ENCODE measurements at regions of chr19 and their contacts with region 1.

Region 1: GRCh38 chr19:2977001-2977685 is at the start of gene TLE6:
- DNase-seq: peak; percentile 96
- H3K4me3 ChIP-seq: peak within 1 kb of the TSS; percentile 3 to 54 (median 32)
- H3K27ac ChIP-seq: peak within 1 kb of the TSS; percentile 11 to 62 (median 45)
- H3K4me1 ChIP-seq: peaks cover 17 to 39% (median 25%) of the 10 kb centered on the region in 4 donors
- H3K27me3 ChIP-seq: no peaks in the 10 kb centered on the region
- CTCF ChIP-seq: no peak
- EP300 ChIP-seq: no peak
- POLR2A ChIP-seq: no peak
- total RNA-seq, gene TLE6: not detected

Region 2: GRCh38 chr19:2678043-2678671 is 299.0 kb before region 1 on chr19:
- in situ Hi-C with region 1: no loop called
- intact Hi-C with region 1: no loop called
- DNase-seq: peak; percentile 39
- H3K4me3 ChIP-seq: no peak overlapping the region
- H3K27ac ChIP-seq: peak overlapping the region in 2 of 4 donors; percentile 25 to 37
- H3K4me1 ChIP-seq: no peaks in the 10 kb centered on the region
- H3K27me3 ChIP-seq: no peaks in the 10 kb centered on the region
- CTCF ChIP-seq: no peak
- EP300 ChIP-seq: no peak
- POLR2A ChIP-seq: no peak

Region 3: GRCh38 chr19:2811735-2812406 is 165.3 kb before region 1 on chr19:
- in situ Hi-C with region 1: no loop called
- intact Hi-C with region 1: no loop called
- DNase-seq: peak; percentile 83
- H3K4me3 ChIP-seq: peak overlapping the region in 1 of 4 donors; percentile 18
- H3K27ac ChIP-seq: peak overlapping the region; percentile 73 to 77 (median 76)
- H3K4me1 ChIP-seq: peaks cover 0 to 19% (median 16%) of the 10 kb centered on the region in 4 donors
- H3K27me3 ChIP-seq: no peaks in the 10 kb centered on the region
- CTCF ChIP-seq: no peak
- EP300 ChIP-seq: no peak
- POLR2A ChIP-seq: peak; percentile 36

Region 4: GRCh38 chr19:3035542-3036118 is 58.5 kb after region 1 on chr19:
- in situ Hi-C with region 1: loop called in 1 of 4 experiments (anchors 10 kb)
- intact Hi-C with region 1: no loop called
- DNase-seq: peak; percentile 98
- H3K4me3 ChIP-seq: peak overlapping the region; percentile 28 to 62 (median 48)
- H3K27ac ChIP-seq: peak overlapping the region; percentile 92 to 96 (median 94)
- H3K4me1 ChIP-seq: peaks cover 11 to 26% (median 22%) of the 10 kb centered on the region in 4 donors
- H3K27me3 ChIP-seq: no peaks in the 10 kb centered on the region
- CTCF ChIP-seq: peak in 1 of 5 experiments; percentile 15
- EP300 ChIP-seq: no peak
- POLR2A ChIP-seq: peak; percentile 21

Region 5: GRCh38 chr19:3062168-3063102 is 85.3 kb after region 1 on chr19 and contains the start of gene TLE5:
- in situ Hi-C with region 1: no loop called
- intact Hi-C with region 1: loop called (anchors 5 kb)
- DNase-seq: peak; percentile 80
- H3K4me3 ChIP-seq: peak within 1 kb of the TSS; percentile 52 to 97 (median 92)
- H3K27ac ChIP-seq: peak within 1 kb of the TSS; percentile 95 to 99 (median 96)
- H3K4me1 ChIP-seq: peaks cover 20 to 60% (median 38%) of the 10 kb centered on the region in 4 donors
- H3K27me3 ChIP-seq: no peaks in the 10 kb centered on the region
- CTCF ChIP-seq: peak in 2 of 5 experiments; percentile 19 to 20
- EP300 ChIP-seq: no peak
- POLR2A ChIP-seq: peak; percentile 21
- total RNA-seq, gene TLE5: 307 to 561 (median 400) TPM

Region 6: DNA sequence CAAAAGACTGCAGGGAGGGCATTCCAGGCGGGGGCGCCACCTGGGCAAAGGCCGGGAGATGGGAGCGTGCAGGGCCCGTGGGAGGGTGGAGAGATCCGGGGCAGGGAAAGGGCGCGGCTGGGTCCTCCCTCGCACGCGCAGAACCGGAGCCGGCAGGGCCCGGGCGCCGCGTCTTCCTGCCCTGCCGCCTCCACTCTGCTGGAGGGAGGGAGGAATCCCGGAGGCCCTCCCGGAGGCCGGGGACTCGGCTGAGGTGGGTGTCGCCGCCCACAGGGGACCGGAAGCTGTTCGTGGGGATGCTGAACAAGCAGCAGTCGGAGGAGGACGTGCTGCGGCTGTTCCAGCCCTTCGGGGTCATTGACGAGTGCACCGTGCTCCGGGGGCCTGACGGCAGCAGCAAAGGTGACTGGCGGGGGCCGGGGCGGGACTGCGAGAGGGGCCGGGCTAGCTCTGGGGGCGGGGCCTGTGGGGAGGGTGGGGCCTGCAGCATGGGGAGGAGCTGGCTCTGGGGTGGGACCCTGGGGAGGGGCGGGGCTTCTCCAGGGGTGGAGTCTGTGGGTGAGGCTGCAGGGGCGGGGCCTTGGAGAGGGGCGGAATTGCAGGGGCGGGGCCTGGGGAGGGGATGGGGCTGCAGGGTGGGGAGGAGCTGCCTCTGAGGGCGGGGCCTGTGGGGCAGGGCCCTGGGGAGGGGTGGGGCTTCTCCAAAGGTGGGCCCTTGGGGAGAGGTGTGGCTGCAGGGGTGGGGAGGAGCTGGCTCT is 298.6 kb after region 1 on chr19:
- in situ Hi-C with region 1: no loop called
- intact Hi-C with region 1: no loop called
- DNase-seq: peak; percentile 91
- H3K4me3 ChIP-seq: peak overlapping the region in 3 of 4 donors; percentile 15 to 54 (median 47)
- H3K27ac ChIP-seq: peak overlapping the region in 3 of 4 donors; percentile 36 to 68 (median 66)
- H3K4me1 ChIP-seq: peaks cover 0 to 12% (median 11%) of the 10 kb centered on the region in 4 donors
- H3K27me3 ChIP-seq: peaks cover 61% of the 10 kb centered on the region
- CTCF ChIP-seq: peak in 1 of 5 experiments; percentile 47
- EP300 ChIP-seq: no peak
- POLR2A ChIP-seq: no peak

Measured in transverse colon (tissue), 4 donors.